ENCODE measurements at regions of chr9 and their contacts with region 1.

Region 1: DNA sequence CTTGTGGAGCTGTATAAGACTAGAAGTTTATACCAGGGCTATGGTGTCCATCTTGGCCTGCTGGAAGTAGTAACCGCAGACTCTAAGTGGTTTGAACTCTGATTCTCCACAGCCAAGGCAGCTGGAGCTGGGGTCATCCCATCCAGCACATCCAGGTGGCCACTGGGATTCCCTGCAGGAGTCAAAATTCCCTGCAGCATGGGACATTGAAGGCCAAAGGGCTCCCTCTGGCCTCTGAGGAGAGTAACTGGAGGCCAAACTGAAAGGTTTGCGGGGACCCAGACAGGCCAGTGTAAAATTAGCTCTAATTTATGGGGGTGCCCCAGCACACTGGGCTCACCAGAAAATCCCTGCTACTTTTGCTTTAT is 12.2 kb upstream of the PRXL2C start:
- DNase-seq: no peak
- ATAC-seq: no peak
- H3K4me3 Mint-ChIP-seq: no peak overlapping the region
- H3K27ac Mint-ChIP-seq: no peak overlapping the region
- H3K4me1 Mint-ChIP-seq: no peaks in the 10 kb centered on the region
- H3K27me3 Mint-ChIP-seq: peaks cover 9% of the 10 kb centered on the region

Region 2: DNA sequence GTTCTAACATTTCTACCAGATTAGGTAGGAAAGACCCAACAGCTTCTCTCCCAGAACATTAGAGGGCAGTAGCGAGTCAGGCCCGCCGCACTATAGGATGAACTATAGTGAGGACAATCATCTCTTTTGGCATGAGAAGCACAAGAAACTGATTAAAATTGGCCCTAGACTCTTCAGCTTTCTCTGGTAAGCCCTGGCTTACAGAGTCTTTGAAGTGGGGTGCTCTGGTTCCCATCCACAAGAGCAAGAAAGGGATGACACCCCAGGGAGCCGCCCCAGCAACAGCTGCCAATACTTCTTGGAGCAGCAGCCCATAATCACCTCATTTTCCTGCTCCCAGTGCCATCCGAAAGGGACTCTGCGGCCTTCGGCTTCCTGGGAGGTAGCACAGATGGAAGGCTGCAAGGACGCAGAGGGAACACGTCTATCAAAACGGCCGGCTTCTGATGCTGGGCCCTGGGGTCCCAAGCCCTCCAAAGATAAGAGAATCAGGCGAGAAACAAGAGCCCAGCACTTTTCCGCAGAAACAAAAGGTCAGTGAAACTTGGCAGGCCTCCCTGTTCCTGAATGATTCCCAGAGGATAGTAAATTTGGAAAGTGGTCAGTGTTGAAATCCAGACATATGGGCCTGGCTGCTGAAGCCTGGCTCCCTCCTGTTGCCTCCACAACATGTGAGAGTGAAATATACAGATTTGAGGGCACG is 434.7 kb before region 1 on chr9:
- CTCF ChIA-PET with region 1: no interaction called
- POLR2A ChIA-PET with region 1: no interaction called
- intact Hi-C with region 1: loop called (anchors 2 to 10 kb)
- DNase-seq: peak; percentile 66
- ATAC-seq: peak; percentile 82
- H3K4me3 Mint-ChIP-seq: no peak overlapping the region
- H3K27ac Mint-ChIP-seq: no peak overlapping the region
- H3K4me1 Mint-ChIP-seq: no peaks in the 10 kb centered on the region
- H3K27me3 Mint-ChIP-seq: peaks cover 46% of the 10 kb centered on the region

Region 3: GRCh38 chr9:96327694-96328352 is 339.5 kb before region 1 on chr9:
- CTCF ChIA-PET with region 1: interaction called, 21 read pairs
- POLR2A ChIA-PET with region 1: no interaction called
- intact Hi-C with region 1: loop called (anchors 1 to 5 kb)
- DNase-seq: peak; percentile 57
- ATAC-seq: peak; percentile 81
- H3K4me3 Mint-ChIP-seq: no peak overlapping the region
- H3K27ac Mint-ChIP-seq: no peak overlapping the region
- H3K4me1 Mint-ChIP-seq: no peaks in the 10 kb centered on the region
- H3K27me3 Mint-ChIP-seq: no peaks in the 10 kb centered on the region

Region 4: DNA sequence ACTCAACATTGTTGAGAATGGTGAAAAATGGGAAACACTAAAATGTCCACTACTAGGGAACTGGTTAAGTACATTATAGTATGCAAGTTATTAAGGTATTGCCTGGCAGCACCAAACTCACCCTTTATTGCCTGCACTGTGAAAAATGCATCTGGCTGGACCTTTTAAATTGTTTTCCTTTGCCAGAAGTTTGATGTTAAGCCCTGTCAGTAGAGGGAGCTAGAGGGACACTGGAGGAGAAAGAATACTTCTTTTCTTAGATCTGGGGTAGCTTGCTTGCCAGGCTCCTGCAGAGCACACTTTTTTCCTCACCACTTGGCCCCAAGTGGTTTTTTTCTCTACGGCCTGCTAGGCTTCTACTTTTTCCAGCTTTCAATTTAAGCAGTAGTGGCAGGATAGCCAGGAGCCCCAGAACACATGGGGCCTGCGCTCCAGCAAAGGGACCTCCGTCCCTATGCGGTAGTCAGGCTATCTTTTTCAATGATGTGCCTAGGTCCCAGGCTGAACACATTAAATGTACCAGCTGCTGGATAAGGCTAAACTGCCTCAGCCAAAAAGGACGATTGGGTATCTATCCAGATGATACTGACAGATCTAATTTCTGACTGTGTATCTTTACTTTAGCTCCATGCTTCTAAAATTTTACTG is 225.4 kb before region 1 on chr9:
- CTCF ChIA-PET with region 1: interaction called, 8 read pairs
- POLR2A ChIA-PET with region 1: no interaction called
- intact Hi-C with region 1: loop called (anchors 1 to 5 kb)
- DNase-seq: peak; percentile 28
- ATAC-seq: peak; percentile 65
- H3K4me3 Mint-ChIP-seq: no peak overlapping the region
- H3K27ac Mint-ChIP-seq: no peak overlapping the region
- H3K4me1 Mint-ChIP-seq: no peaks in the 10 kb centered on the region
- H3K27me3 Mint-ChIP-seq: no peaks in the 10 kb centered on the region

Region 5: DNA sequence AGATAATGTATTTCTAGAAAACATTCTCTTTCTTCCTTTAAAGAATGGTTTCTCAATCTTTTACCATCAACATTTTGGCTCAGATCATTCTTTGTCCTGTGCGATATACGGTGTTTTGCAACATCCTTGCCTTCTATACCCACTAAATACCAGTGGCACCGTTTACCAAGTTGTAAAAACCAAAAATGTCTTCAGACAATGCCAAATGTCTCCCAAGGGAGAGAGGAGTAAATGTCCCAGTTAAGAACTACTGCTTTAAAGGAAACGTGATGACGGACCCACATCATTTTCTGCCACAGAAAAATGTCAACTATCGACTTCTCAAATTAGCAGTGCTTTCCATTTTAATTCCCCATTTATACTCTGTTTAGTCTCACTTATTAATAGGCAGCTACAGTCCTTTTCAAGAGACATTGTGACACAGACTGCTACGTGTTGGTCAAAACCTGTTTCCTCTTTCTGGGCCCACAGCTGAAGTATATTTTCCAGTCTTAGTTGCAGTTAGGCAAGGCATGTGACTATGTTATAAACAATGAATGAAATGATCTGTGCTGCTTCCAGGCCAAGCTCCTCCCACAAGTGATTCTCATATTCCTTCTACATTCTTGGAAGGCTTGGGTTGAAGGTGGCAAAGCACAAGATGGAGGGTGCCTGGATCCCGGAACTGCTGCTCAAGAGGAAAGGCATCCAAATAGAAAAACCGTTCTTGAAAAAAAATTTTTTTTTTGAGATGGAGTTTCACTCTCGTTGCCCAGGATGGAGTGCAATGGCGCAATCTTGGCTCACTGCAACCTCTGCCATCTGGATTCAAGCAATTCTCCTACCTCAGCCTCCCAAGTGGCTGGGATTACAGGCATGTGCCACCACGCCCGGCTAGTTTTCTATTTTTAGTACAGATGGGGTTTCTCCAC is 21.0 kb before region 1 on chr9:
- CTCF ChIA-PET with region 1: no interaction called
- POLR2A ChIA-PET with region 1: no interaction called
- intact Hi-C with region 1: no loop called
- DNase-seq: no peak
- ATAC-seq: no peak
- H3K4me3 Mint-ChIP-seq: no peak overlapping the region
- H3K27ac Mint-ChIP-seq: no peak overlapping the region
- H3K4me1 Mint-ChIP-seq: no peaks in the 10 kb centered on the region
- H3K27me3 Mint-ChIP-seq: no peaks in the 10 kb centered on the region